SK-N-SH (cell line): ENCODE measurements at regions of chr12 and their contacts with region 1.

Region 1: GRCh38 chr12:49130151-49131050 is 794 bp downstream of the TUBA1B start:
- DNase-seq: peak; percentile 88
- H3K4me3 ChIP-seq: peak overlapping the region; percentile 77 to 99
- H3K27ac ChIP-seq: peak overlapping the region; percentile 94 to 97
- H3K4me1 ChIP-seq: peaks cover 10 to 15% of the 10 kb centered on the region in 2 experiments; a peak in 3 of 4 replicates
- H3K27me3 ChIP-seq: no peaks in the 10 kb centered on the region
- CTCF ChIP-seq: peak; percentile 87
- EP300 ChIP-seq: peak in 1 of 2 experiments; percentile 29; a peak in 1 of 4 replicates
- RAD21 ChIP-seq: peak; percentile 44

Region 2: DNA sequence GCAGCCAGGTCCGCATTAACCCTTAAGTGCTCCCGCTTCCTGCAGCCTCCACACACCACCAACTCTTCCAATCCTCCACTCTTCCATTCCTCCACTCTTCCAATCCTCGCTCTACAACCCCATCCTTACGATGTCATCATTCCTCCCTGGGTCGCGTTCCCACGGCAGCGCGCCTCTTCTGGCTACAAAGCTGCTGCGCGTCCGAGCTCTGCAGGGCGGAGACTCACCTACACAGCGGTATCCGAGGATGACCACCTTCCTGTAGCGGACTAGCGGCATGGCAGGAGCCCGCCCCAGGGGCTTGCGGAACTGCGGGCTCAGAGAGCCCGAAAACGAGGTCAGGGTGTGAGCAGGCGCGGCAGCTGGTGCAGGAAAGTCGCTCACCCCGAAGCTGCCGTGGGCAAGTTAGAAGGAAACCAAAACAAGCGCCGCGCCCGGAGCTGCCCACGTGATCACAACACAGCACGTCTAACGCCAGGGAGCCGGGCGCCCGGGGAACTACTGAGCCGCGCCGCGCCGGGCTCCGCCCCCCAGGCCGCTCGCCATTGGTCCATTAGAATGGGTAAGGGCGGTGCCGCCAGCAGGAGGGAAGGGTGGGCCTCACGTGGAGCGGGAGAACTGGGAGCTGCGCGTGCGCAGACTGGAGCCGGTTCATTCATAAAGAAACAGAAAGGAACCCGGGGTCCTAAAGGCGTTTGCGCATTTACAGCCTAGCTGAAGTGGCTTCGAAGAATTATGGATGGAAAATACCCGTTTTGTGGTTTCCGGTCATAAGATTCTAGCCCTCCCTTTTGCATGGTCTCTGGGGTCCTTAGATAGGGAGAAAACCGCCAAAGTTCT is 60.7 kb before region 1 on chr12 and contains the start of gene RHEBL1:
- CTCF ChIA-PET with region 1: interaction called, 20 read pairs
- POLR2A ChIA-PET with region 1: interaction called, 20 read pairs
- DNase-seq: peak; percentile 97
- H3K4me3 ChIP-seq: peak within 1 kb of the TSS; percentile 70 to 99
- H3K27ac ChIP-seq: peak within 1 kb of the TSS; percentile 60 to 67
- H3K4me1 ChIP-seq: peaks cover 3 to 5% of the 10 kb centered on the region in 2 experiments; a peak in 1 of 4 replicates
- H3K27me3 ChIP-seq: no peaks in the 10 kb centered on the region
- CTCF ChIP-seq: peak; percentile 28; the same call in 1 of the 2 replicates
- EP300 ChIP-seq: no peak
- RAD21 ChIP-seq: no peak
- polyA plus RNA-seq, gene RHEBL1: 2.2 and 2.3 TPM in 2 replicates

Region 3: DNA sequence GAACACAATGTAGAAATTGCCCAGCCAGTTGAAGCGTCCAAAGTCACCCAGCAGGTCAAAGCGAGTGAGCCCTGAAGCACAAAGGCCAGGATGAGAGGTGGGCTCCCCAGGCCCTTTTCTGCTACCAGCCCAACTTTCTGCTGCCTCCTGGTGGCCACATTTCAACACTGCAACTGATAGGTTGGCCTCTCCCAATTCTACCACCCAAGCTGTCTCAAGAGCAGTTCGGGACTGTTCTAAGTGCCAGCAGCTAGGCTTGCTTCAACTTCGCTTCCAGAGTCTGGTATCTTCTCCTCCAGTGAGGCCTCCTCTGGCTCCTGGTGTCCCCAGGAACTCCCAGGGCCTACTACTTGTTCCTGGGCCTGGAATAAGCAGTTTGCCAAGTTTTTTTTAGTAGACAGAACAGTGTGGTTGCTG is 32.4 kb before region 1 on chr12:
- CTCF ChIA-PET with region 1: interaction called, 52 read pairs
- POLR2A ChIA-PET with region 1: interaction called, 10 read pairs
- DNase-seq: peak; percentile 78
- H3K4me3 ChIP-seq: no peak overlapping the region; a peak in 1 of 4 replicates
- H3K27ac ChIP-seq: no peak overlapping the region
- H3K4me1 ChIP-seq: peaks cover 0 to 13% of the 10 kb centered on the region in 2 experiments; a peak in 1 of 4 replicates
- H3K27me3 ChIP-seq: peaks cover 12% of the 10 kb centered on the region; the same call in 1 of the 2 replicates
- CTCF ChIP-seq: peak; percentile 79
- EP300 ChIP-seq: no peak
- RAD21 ChIP-seq: peak; percentile 57

Region 4: GRCh38 chr12:49110464-49111155 is 19.8 kb before region 1 on chr12 and contains the start of gene LMBR1L:
- CTCF ChIA-PET with region 1: interaction called, 28 read pairs
- POLR2A ChIA-PET with region 1: interaction called, 28 read pairs
- DNase-seq: peak; percentile 97
- H3K4me3 ChIP-seq: peak within 1 kb of the TSS; percentile 82 to 100
- H3K27ac ChIP-seq: peak within 1 kb of the TSS; percentile 85 to 88
- H3K4me1 ChIP-seq: peaks cover 0 to 12% of the 10 kb centered on the region in 2 experiments; a peak in 1 of 4 replicates
- H3K27me3 ChIP-seq: no peaks in the 10 kb centered on the region
- CTCF ChIP-seq: peak; percentile 46
- EP300 ChIP-seq: no peak
- RAD21 ChIP-seq: peak; percentile 12; the same call in 1 of the 2 replicates
- polyA plus RNA-seq, gene LMBR1L: 43.0 and 61.4 TPM in 2 replicates

Region 5: GRCh38 chr12:49225556-49226181 is 95.3 kb after region 1 on chr12:
- CTCF ChIA-PET with region 1: interaction called, 61 read pairs
- POLR2A ChIA-PET with region 1: interaction called, 22 read pairs
- DNase-seq: no peak
- H3K4me3 ChIP-seq: no peak overlapping the region
- H3K27ac ChIP-seq: no peak overlapping the region
- H3K4me1 ChIP-seq: peaks cover 10 to 11% of the 10 kb centered on the region in 2 experiments; a peak in 2 of 4 replicates
- H3K27me3 ChIP-seq: no peaks in the 10 kb centered on the region
- CTCF ChIP-seq: peak; percentile 39
- EP300 ChIP-seq: no peak
- RAD21 ChIP-seq: peak; percentile 30; the same call in 1 of the 2 replicates